Activated B cell treated with CpG ODN at 0.5 μM for 24 hours (primary cell): ENCODE measurements at regions of chr11 and their contacts with region 1.

Region 1: GRCh38 chr11:66855574-66856495 is 1.0 kb upstream of the LRFN4 start:
- DNase-seq: no peak
- ATAC-seq: peak; percentile 86
- H3K4me3 Mint-ChIP-seq: peak overlapping the region; percentile 86
- H3K27ac Mint-ChIP-seq: peak overlapping the region; percentile 76
- H3K4me1 Mint-ChIP-seq: peaks cover 16% of the 10 kb centered on the region
- H3K27me3 Mint-ChIP-seq: no peaks in the 10 kb centered on the region
- CTCF ChIP-seq: no peak

Region 2: GRCh38 chr11:65121865-65122581 is 1733.8 kb before region 1 on chr11 and contains the starts of genes FAU and MRPL49:
- CTCF ChIA-PET with region 1: no interaction called
- POLR2A ChIA-PET with region 1: no interaction called
- intact Hi-C with region 1: no loop called
- DNase-seq: peak; percentile 96
- ATAC-seq: peak; percentile 81
- H3K4me3 Mint-ChIP-seq: peak within 1 kb of the TSS; percentile 99
- H3K27ac Mint-ChIP-seq: peak within 1 kb of the TSS; percentile 99
- H3K4me1 Mint-ChIP-seq: peaks cover 60% of the 10 kb centered on the region
- H3K27me3 Mint-ChIP-seq: no peaks in the 10 kb centered on the region
- CTCF ChIP-seq: no peak
- total RNA-seq, gene FAU: 1,416 and 1,501 TPM in 2 replicates
- total RNA-seq, gene MRPL49: 60.0 and 62.4 TPM in 2 replicates

Region 3: DNA sequence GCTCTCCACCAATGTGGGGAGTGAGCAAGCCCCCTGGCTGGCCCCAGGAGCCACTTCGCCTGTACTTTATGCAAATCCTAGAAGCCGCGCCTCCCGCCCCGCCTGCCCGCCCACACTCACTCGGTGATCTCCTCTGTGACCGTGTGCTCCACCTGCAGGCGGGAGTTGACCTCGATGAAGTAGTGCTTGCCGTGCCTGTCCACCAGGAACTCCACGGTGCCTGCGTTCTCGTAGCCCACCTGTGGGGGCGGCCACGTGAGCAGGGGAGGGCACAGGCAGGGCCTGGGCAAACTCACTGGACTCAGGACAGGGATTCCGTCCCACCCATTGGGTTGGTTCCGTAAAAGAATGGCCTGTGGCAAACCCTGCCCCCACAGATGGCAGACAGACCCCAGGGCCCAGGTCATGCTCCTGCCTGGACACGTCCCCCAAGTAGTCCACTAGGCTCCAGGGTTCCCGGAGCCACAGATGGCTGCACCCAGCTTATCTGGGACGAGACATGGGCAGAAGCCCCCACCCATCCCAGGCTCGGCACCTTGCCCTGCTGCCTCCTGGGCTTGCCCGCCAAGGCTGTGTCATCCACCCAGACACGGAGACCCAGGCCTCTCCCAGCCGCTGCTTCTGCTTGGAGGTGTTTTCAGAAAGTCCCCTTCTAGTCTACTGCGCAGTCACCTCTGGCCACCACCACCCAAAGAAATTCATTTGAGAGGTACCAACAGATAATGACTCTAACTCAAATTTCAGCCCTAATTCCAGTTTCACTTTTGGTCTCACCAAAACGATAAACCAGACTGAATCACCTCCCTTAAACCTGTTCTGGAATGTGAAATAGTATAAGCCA is 13.1 kb after region 1 on chr11:
- CTCF ChIA-PET with region 1: no interaction called
- POLR2A ChIA-PET with region 1: interaction called, 5 read pairs
- intact Hi-C with region 1: loop called (anchors 1 kb)
- DNase-seq: peak; percentile 70
- ATAC-seq: peak; percentile 99
- H3K4me3 Mint-ChIP-seq: no peak overlapping the region
- H3K27ac Mint-ChIP-seq: no peak overlapping the region
- H3K4me1 Mint-ChIP-seq: peaks cover 16% of the 10 kb centered on the region
- H3K27me3 Mint-ChIP-seq: no peaks in the 10 kb centered on the region
- CTCF ChIP-seq: no peak